SK-MEL-5 (cell line): ENCODE measurements at regions of chr9 and their contacts with region 1.

Region 1: GRCh38 chr9:133375724-133376654 is at the starts of genes STKLD1 and SURF4:
- DNase-seq: peak; percentile 95
- total RNA-seq, gene STKLD1: 1.4 and 1.7 TPM in 2 replicates
- total RNA-seq, gene SURF4: 469 and 490 TPM in 2 replicates

Region 2: DNA sequence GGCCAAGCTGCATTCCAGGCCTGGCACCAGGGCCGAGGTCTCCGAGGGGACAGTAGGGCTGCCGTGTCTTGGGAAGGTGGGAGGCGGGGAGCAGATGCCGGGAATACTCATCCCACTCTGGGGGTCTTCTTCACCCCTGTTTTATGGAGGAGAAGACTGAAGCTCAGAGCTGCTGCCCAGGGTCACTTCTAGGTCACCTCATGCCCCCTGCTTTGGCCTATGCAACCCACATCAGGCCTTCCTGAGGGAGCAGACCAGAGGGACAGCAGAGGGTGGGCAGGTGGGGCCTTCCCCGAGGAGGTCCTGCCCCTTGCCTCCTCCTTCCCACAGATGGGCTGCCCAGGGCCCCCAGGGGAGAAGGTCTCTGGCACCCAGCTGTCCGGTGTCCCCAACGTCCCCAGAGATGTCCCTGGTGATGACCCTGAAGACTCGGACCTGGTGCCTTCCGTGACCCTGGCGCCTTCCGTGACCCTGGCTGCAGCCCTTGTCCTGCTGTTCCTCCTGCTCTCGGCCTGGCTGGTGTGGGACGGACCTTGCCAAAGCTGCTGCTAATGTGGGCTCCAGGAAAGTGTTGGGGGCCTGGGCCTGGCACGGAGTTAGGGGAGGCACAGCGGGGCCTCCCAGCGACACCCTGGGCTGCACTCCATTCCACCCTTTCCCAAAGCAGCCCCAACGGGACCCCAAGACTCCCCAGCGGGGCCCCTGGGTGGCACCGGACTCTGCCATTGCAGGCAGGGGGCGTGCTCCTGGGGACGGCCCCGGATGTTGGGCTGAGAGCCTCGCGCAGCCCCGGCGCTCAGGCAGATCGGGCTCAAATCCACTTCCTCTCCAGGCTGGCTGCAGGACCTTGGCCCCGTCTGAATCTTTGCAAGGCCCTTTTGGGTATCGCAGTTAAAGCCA is 109.6 kb after region 1 on chr9:
- in situ Hi-C with region 1: loop called (anchors 10 kb)
- DNase-seq: peak; percentile 16